HCT116 (cell line): ENCODE measurements at regions of chr21 and their contacts with region 1.

Region 1: DNA sequence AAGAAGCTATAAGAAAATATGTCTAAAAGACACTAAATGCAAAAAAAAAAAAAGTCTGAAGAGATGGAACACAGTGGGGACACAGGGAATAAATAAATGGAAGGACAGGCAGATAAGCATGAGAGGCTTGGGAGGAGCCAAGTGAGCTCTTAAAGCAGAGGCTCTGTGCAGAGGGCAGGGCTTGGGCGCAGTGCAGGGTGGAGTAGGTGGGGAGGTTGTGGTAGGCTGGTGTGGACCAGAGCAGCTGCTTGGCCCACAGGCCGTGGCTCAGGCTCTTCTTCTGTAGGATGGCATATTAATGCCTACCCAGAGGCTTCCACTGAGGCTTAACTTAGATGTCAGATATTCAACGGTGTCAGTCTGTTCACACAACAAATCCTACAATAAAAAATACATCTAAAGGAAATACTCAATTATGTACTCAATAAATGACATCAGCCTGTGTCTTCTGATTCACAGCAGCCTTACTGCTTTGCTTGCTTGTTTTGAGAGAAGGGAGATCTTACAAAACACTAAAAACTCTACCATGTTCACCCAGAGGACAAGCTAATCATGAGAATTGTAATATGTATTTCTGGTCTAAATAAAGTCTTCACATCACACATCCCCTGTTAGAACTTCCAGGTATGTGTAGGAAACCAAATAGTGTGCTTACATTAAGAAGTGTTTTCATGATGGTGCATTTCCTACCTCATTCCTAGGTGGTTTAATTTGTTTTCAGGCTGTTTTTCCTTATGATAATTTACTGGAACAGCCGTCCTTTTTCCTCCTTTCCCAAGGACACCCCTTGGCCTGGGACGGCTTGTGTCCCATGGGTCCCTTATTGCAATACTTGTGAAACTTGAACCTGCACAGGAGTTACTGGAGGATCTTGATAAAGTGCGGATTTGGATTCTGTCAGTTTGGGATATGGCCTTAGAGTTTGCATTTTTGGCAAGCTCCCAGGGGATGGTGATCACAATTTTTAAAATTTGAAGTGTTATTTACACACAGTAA is 24.9 kb downstream of the DIP2A start:
- DNase-seq: no peak
- ATAC-seq: 0 out of 2 replicates have a peak, but pooled peaks have one; percentile 34
- H3K4me3 ChIP-seq: no peak overlapping the region
- H3K27ac ChIP-seq: no peak overlapping the region
- H3K4me1 ChIP-seq: no peaks in the 10 kb centered on the region
- H3K27me3 ChIP-seq: no peaks in the 10 kb centered on the region
- CTCF ChIP-seq: no peak
- POLR2A ChIP-seq: no peak
- RAD21 ChIP-seq: no peak

Region 2: GRCh38 chr21:46532080-46532479 is 48.5 kb after region 1 on chr21:
- CTCF ChIA-PET with region 1: no interaction called
- POLR2A ChIA-PET with region 1: no interaction called
- RAD21 ChIA-PET with region 1: no interaction called
- intact Hi-C with region 1: loop called (anchors 5 kb)
- DNase-seq: no peak
- ATAC-seq: no peak
- H3K4me3 ChIP-seq: no peak overlapping the region
- H3K27ac ChIP-seq: no peak overlapping the region
- H3K4me1 ChIP-seq: peaks cover 0 to 8% of the 10 kb centered on the region in 2 experiments; a peak in 3 of 4 replicates
- H3K27me3 ChIP-seq: no peaks in the 10 kb centered on the region
- CTCF ChIP-seq: no peak
- POLR2A ChIP-seq: no peak
- RAD21 ChIP-seq: no peak